SK-N-SH (cell line): ENCODE measurements at regions of chr11 and their contacts with region 1.

Region 1: DNA sequence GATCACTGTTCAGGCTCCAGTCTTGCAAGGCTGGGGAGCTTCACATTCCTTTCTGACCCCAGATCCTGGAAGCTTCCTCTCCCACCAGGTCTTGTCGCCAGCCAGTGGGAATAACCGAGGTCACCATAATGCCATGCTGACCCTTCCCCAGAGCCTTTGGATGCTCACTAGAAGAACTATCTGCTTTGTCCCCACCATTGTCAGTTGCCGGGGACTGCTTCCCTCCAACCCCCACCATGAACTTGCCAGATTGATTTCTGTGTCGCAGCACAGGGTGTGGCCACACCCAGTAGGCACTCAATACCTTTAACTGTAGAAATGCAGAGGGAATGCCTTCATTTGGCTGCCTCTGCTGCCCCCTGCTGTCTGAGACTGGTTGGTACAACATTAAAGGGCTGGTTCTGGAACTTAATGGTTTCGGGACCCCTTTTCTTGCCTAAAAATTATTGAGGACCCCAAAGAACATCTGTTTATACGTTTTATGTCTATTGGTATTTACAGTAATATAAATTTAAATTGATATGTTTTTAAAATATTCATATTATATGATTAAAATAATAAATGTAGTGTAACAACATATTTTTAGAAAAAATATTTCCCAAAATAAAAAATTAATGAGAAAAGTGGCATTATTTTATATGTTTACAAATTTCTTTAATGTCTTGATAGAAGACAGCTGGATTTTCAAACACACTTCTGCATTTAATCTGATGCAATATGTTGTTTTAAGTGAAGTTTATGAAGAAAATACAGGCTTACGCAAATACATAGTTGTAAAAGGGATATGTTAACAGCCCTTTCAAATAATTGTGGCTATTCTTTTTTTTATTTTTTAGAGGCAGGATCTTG is 6.7 kb upstream of the GDPD5 start:
- DNase-seq: peak; percentile 71
- H3K4me3 ChIP-seq: no peak overlapping the region
- H3K27ac ChIP-seq: no peak overlapping the region
- H3K4me1 ChIP-seq: no peaks in the 10 kb centered on the region
- H3K27me3 ChIP-seq: no peaks in the 10 kb centered on the region
- CTCF ChIP-seq: peak; percentile 89
- EP300 ChIP-seq: no peak
- RAD21 ChIP-seq: peak; percentile 94

Region 2: DNA sequence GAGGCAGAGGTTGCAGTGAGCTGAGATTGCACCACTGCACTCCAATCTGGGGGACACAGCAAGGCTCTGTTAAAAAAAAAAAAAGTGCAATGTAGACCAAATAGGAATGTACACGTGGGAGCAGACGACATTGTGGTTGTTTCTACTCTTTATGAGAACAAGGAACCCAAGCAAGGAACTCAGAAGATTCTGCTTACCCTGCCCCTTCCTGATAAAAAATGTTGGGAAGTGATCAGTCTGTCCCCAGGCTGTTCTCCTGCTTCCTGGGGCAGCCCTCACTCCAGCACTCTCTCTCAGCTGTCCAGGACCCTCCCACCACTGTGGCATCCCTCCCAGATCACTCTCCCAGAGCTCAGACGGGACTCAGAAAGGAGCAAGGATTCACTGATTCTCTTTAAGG is 349.8 kb before region 1 on chr11:
- CTCF ChIA-PET with region 1: no interaction called
- POLR2A ChIA-PET with region 1: no interaction called
- DNase-seq: no peak
- H3K4me3 ChIP-seq: no peak overlapping the region
- H3K27ac ChIP-seq: no peak overlapping the region
- H3K4me1 ChIP-seq: peaks cover 0 to 11% of the 10 kb centered on the region in 2 experiments; a peak in 1 of 4 replicates
- H3K27me3 ChIP-seq: no peaks in the 10 kb centered on the region; the same call in 1 of the 2 replicates
- CTCF ChIP-seq: no peak
- EP300 ChIP-seq: no peak
- RAD21 ChIP-seq: no peak

Region 3: DNA sequence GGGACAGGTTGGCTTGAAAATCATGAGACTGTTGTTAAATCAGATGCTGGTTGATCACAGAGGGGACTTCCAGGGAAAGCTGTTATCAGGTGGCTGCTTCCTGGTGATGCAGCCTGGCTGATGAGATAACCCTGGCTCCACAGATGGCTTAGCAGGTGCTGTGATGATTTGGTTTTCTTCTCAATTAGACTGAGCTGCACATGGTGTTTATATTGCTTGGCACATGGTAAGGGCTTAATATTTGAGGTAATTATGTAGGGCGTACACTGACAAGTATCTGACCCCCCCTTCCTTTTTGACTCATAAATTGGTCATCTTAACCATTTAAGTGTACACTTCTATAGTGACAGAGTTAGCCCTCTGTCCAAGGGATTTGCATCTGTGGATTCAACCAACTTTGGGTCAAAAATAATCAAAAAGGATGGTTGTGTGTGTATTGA is 126.1 kb before region 1 on chr11:
- CTCF ChIA-PET with region 1: interaction called, 11 read pairs
- POLR2A ChIA-PET with region 1: no interaction called
- DNase-seq: peak; percentile 61
- H3K4me3 ChIP-seq: no peak overlapping the region
- H3K27ac ChIP-seq: peak overlapping the region; percentile 3 to 74; a peak in 3 of 4 replicates
- H3K4me1 ChIP-seq: peaks cover 22 to 43% of the 10 kb centered on the region in 2 experiments
- H3K27me3 ChIP-seq: no peaks in the 10 kb centered on the region
- CTCF ChIP-seq: no peak
- EP300 ChIP-seq: peak in 1 of 2 experiments; percentile 57; a peak in 1 of 4 replicates
- RAD21 ChIP-seq: no peak

Region 4: DNA sequence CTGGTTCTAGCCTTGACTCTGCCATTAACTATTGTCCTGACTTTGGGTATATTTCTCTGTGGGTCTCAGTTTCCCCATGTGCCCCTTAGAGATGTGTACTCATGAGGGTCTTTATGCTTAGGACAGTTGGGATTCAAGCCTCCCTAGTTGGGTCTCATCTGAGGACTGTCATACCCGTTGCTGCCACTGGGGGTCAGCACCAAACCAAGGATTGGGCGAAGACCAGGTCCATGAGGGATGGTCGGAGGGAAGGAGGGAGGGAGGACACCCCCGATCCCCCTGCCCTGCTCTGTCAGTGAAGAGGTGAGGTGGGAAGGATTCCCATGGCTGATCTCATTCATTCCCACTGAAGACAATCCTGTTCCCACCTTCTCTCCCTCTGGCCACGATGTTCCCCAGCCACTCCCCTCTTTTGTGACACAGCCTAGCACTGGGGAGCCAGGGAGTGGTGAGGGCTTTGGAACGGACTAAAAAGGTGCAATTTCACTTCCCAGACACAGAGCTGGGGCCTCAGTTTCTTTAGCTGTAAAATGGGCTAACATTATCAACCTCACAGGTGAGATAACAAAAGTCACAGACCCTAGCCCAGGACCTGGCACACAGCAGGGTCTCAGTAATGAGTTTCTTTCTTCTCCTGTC is 87.0 kb before region 1 on chr11:
- CTCF ChIA-PET with region 1: interaction called, 275 read pairs
- POLR2A ChIA-PET with region 1: interaction called, 3 read pairs
- DNase-seq: peak; percentile 92
- H3K4me3 ChIP-seq: peak overlapping the region in 1 of 2 experiments; percentile 9; a peak in 1 of 4 replicates
- H3K27ac ChIP-seq: no peak overlapping the region
- H3K4me1 ChIP-seq: peaks cover 0 to 2% of the 10 kb centered on the region in 2 experiments; a peak in 1 of 4 replicates
- H3K27me3 ChIP-seq: no peaks in the 10 kb centered on the region
- CTCF ChIP-seq: peak; percentile 94
- EP300 ChIP-seq: no peak
- RAD21 ChIP-seq: peak; percentile 100

Region 5: GRCh38 chr11:75468534-75469340 is 63.7 kb before region 1 on chr11:
- CTCF ChIA-PET with region 1: interaction called, 11 read pairs
- POLR2A ChIA-PET with region 1: no interaction called
- DNase-seq: peak; percentile 64
- H3K4me3 ChIP-seq: no peak overlapping the region
- H3K27ac ChIP-seq: no peak overlapping the region; a peak in 1 of 4 replicates
- H3K4me1 ChIP-seq: peaks cover 0 to 52% of the 10 kb centered on the region in 2 experiments; a peak in 3 of 4 replicates
- H3K27me3 ChIP-seq: no peaks in the 10 kb centered on the region
- CTCF ChIP-seq: no peak
- EP300 ChIP-seq: no peak
- RAD21 ChIP-seq: no peak

Region 6: DNA sequence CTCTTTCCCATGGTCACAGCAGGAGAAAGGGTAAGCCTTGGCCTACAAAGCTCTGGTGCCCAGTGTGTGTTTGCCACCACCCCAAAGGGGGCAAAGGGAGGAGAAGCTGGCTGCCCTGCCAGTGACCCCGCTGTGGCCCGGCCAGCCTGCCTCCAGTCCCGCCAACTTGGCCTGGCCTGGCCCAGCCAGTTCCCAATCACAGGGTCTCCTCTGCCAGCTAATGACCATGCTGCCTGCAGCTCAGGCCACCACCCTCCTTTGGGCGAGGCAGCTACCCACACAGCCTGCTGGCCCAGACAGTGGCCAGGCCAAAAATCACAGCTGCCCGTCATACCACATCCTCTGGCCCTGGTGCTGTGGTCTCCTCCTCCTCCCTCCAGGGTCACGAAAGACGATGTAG is 11.7 kb before region 1 on chr11:
- CTCF ChIA-PET with region 1: interaction called, 21 read pairs
- POLR2A ChIA-PET with region 1: no interaction called
- DNase-seq: no peak
- H3K4me3 ChIP-seq: no peak overlapping the region
- H3K27ac ChIP-seq: no peak overlapping the region
- H3K4me1 ChIP-seq: peaks cover 0 to 31% of the 10 kb centered on the region in 2 experiments; a peak in 1 of 4 replicates
- H3K27me3 ChIP-seq: no peaks in the 10 kb centered on the region
- CTCF ChIP-seq: no peak
- EP300 ChIP-seq: no peak
- RAD21 ChIP-seq: no peak